Mucosa of descending colon (tissue), 3 donors: ENCODE measurements at regions of chr14 and their contacts with region 1.

Region 1: GRCh38 chr14:22386924-22387775 is 201.9 kb downstream of the DAD1 start:
- DNase-seq: peak in 1 of 3 donors; percentile 92
- ATAC-seq: no peak
- H3K4me3 ChIP-seq: no peak overlapping the region
- H3K4me1 ChIP-seq: peaks cover 12% of the 10 kb centered on the region
- CTCF ChIP-seq: peak; percentile 66

Region 2: GRCh38 chr14:22427771-22428231 is 40.7 kb after region 1 on chr14:
- intact Hi-C with region 1: no loop called
- DNase-seq: peak in 1 of 3 donors; percentile 17
- ATAC-seq: peak; percentile 35
- H3K4me3 ChIP-seq: no peak overlapping the region
- H3K4me1 ChIP-seq: no peaks in the 10 kb centered on the region
- CTCF ChIP-seq: no peak

Region 3: GRCh38 chr14:22472935-22473854 is 86.0 kb after region 1 on chr14:
- intact Hi-C with region 1: loop called (anchors 2 kb)
- DNase-seq: peak in 1 of 3 donors; percentile 83
- ATAC-seq: peak; percentile 65
- H3K4me3 ChIP-seq: no peak overlapping the region
- H3K4me1 ChIP-seq: no peaks in the 10 kb centered on the region
- CTCF ChIP-seq: no peak